Activated CD4-positive, alpha-beta T cell treated with anti-CD3 and anti-CD28 coated beads for 36 hours (primary cell): ENCODE measurements at regions of chrX and their contacts with region 1.

Region 1: GRCh38 chrX:150365051-150365989 is 2.2 kb downstream of the MAMLD1 start:
- DNase-seq: peak; percentile 79
- ATAC-seq: peak; percentile 48
- H3K4me3 Mint-ChIP-seq: peak overlapping the region; percentile 74
- H3K27ac Mint-ChIP-seq: no peak overlapping the region
- H3K4me1 Mint-ChIP-seq: peaks cover 22% of the 10 kb centered on the region
- H3K27me3 Mint-ChIP-seq: peaks cover 10% of the 10 kb centered on the region

Region 2: DNA sequence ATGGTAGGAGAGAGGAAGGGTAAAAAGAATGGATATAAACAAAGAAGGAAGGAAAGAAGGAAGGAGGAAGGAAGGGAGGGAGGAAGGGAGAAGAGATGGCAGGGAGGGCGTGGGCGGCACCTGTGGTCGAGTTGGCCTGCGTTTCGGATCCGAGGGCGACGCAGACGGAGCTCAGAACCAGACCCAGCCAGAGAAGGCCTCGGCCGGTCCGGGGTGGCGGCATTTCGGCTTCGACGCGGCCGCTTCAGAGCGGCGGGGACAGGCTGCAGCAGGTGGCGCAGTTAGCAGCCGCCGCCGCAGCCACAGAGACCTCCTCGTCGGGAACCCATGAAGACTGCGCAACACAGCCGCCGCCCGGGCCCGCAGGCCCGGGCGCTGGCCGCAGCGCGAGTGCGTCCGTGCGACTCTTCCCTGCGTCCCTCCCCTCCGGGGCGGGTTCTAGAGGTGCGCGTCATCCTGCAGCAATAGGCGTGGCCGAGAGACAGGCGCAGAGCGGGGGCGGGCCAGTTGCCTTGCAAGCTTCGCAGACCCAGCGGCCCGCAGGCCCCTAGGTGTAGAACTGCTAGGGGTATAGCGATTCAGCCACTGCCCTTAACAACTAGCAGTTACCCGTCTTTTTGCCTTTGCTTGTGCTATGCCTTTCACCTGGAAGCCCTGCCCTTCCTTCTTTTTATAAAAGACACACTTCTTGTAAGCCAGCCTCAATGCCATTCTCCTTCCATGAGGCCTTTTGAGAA is 860.2 kb before region 1 on chrX and contains the start of gene IDS:
- CTCF ChIA-PET with region 1: no interaction called
- POLR2A ChIA-PET with region 1: no interaction called
- intact Hi-C with region 1: loop called in 1 of 2 experiments (anchors 10 kb)
- DNase-seq: peak; percentile 93
- ATAC-seq: peak; percentile 74
- H3K4me3 Mint-ChIP-seq: peak within 1 kb of the TSS; percentile 99
- H3K27ac Mint-ChIP-seq: peak within 1 kb of the TSS; percentile 99
- H3K4me1 Mint-ChIP-seq: peaks cover 31% of the 10 kb centered on the region
- H3K27me3 Mint-ChIP-seq: peaks cover under 1% of the 10 kb centered on the region
- total RNA-seq, gene IDS: 52.6 to 64.3 TPM

Region 3: GRCh38 chrX:149962859-149963757 is 402.2 kb before region 1 on chrX:
- CTCF ChIA-PET with region 1: no interaction called
- POLR2A ChIA-PET with region 1: no interaction called
- intact Hi-C with region 1: loop called (anchors 5 to 10 kb)
- DNase-seq: peak; percentile 44
- ATAC-seq: peak; percentile 63
- H3K4me3 Mint-ChIP-seq: no peak overlapping the region
- H3K27ac Mint-ChIP-seq: no peak overlapping the region
- H3K4me1 Mint-ChIP-seq: peaks cover 4% of the 10 kb centered on the region
- H3K27me3 Mint-ChIP-seq: no peaks in the 10 kb centered on the region

Region 4: DNA sequence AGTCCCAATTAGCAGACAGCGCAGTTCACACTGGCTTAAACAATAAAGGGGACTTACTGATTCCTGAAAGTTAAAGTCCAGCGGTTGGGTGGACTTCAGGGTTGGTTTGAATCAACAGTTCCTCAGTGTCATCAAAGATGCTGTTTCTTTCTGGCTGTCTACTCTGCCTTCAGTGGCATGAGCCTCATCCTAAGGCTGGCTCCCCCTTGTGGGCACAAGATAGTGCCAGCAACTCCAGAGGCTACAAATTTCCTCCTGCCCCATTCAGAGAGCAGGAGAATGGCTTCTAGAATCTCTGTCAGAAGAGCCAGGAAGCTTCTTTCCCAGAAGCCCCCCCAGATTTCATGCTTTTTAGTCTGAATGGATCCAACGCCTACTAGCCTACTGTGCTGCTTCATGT is 120.7 kb after region 1 on chrX:
- CTCF ChIA-PET with region 1: interaction called, 6 read pairs
- POLR2A ChIA-PET with region 1: no interaction called
- intact Hi-C with region 1: loop called (anchors 2 to 5 kb)
- DNase-seq: peak; percentile 66
- ATAC-seq: peak; percentile 28
- H3K4me3 Mint-ChIP-seq: no peak overlapping the region
- H3K27ac Mint-ChIP-seq: no peak overlapping the region
- H3K4me1 Mint-ChIP-seq: peaks cover 26% of the 10 kb centered on the region
- H3K27me3 Mint-ChIP-seq: no peaks in the 10 kb centered on the region

Region 5: GRCh38 chrX:150575416-150575808 is 210.1 kb after region 1 on chrX:
- CTCF ChIA-PET with region 1: interaction called, 3 read pairs
- POLR2A ChIA-PET with region 1: interaction called, 3 read pairs
- intact Hi-C with region 1: loop called (anchors 2 to 5 kb)
- DNase-seq: peak; percentile 80
- ATAC-seq: peak; percentile 71
- H3K4me3 Mint-ChIP-seq: peak overlapping the region; percentile 58
- H3K27ac Mint-ChIP-seq: peak overlapping the region; percentile 93
- H3K4me1 Mint-ChIP-seq: peaks cover 83% of the 10 kb centered on the region
- H3K27me3 Mint-ChIP-seq: no peaks in the 10 kb centered on the region